Panc1 (cell line): ENCODE measurements at regions of chr16 and their contacts with region 1.

Region 1: GRCh38 chr16:30458561-30459394 is 13.1 kb upstream of the SEPHS2 start:
- DNase-seq: no peak
- ATAC-seq: peak; percentile 62; the same call in 1 of the 2 replicates
- H3K4me3 ChIP-seq: no peak overlapping the region
- H3K27ac ChIP-seq: no peak overlapping the region
- H3K4me1 ChIP-seq: no peaks in the 10 kb centered on the region
- H3K27me3 ChIP-seq: no peaks in the 10 kb centered on the region
- CTCF ChIP-seq: no peak

Region 2: GRCh38 chr16:30417529-30418349 is 41.0 kb before region 1 on chr16:
- CTCF ChIA-PET with region 1: no interaction called
- POLR2A ChIA-PET with region 1: no interaction called
- in situ Hi-C with region 1: no loop called
- intact Hi-C with region 1: no loop called
- DNase-seq: peak; percentile 81
- ATAC-seq: peak; percentile 94
- H3K4me3 ChIP-seq: peak overlapping the region; percentile 45 to 55
- H3K27ac ChIP-seq: peak overlapping the region; percentile 77
- H3K4me1 ChIP-seq: peaks cover 13% of the 10 kb centered on the region
- H3K27me3 ChIP-seq: no peaks in the 10 kb centered on the region
- CTCF ChIP-seq: no peak

Region 3: DNA sequence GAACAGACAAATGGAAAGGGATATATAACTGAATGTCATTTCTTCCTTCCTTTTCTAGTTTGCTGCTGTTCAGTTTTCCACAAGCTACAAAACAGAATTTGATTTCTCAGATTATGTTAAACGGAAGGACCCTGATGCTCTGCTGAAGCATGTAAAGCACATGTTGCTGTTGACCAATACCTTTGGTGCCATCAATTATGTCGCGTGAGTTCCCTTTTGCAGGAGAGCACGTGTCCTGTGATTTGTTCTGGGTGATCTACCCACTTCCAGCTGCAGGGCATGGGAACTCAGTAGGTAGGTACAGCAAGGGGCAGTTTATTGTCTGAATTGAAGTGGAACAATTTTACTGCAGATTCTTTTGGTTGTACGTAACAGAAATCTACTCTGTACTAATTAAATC is 22.6 kb after region 1 on chr16:
- CTCF ChIA-PET with region 1: no interaction called
- POLR2A ChIA-PET with region 1: interaction called, 17 read pairs
- in situ Hi-C with region 1: no loop called
- intact Hi-C with region 1: no loop called
- DNase-seq: no peak
- ATAC-seq: no peak
- H3K4me3 ChIP-seq: no peak overlapping the region
- H3K27ac ChIP-seq: no peak overlapping the region
- H3K4me1 ChIP-seq: no peaks in the 10 kb centered on the region
- H3K27me3 ChIP-seq: no peaks in the 10 kb centered on the region
- CTCF ChIP-seq: no peak

Region 4: GRCh38 chr16:30490210-30490609 is 31.4 kb after region 1 on chr16:
- CTCF ChIA-PET with region 1: no interaction called
- POLR2A ChIA-PET with region 1: interaction called, 13 read pairs
- in situ Hi-C with region 1: no loop called
- intact Hi-C with region 1: no loop called
- DNase-seq: no peak
- ATAC-seq: no peak
- H3K4me3 ChIP-seq: no peak overlapping the region
- H3K27ac ChIP-seq: no peak overlapping the region
- H3K4me1 ChIP-seq: 0 out of 2 replicates have a peak, but pooled peaks cover 3% of the 10 kb centered on the region
- H3K27me3 ChIP-seq: no peaks in the 10 kb centered on the region
- CTCF ChIP-seq: no peak

Region 5: DNA sequence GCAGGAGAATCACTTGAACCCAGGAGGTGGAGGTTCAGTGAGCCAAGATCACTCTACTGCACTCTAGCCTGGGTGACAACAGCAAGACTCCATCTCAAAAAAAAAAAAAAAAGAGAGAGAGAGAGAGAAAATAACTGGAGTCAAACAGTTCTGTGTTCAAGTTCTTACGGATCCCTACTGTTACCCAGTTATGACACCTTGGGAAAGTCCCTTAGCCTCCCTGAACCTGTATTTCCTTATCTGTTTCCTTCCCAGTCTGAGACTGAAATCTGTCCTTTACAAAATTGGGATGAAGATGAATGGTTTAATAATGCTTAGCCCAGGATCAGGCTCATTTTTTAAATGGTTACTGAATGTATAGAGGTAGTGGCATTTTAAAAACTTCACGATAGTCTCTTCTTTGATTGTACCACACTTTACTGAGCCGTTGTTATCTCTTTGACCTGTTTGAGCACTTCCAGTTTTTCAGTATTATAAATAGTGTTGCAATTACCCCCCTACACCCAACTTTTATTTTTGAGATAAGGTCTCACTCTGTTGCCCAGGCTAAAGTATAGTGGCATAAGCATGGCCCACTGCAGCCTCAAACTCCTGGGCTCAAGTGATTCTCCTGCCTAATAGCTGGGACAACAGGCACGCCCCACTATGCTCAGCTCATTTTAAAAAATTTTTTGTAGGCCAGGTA is 50.4 kb after region 1 on chr16:
- CTCF ChIA-PET with region 1: interaction called, 4 read pairs
- POLR2A ChIA-PET with region 1: interaction called, 12 read pairs
- in situ Hi-C with region 1: no loop called
- intact Hi-C with region 1: no loop called
- DNase-seq: no peak
- ATAC-seq: no peak
- H3K4me3 ChIP-seq: no peak overlapping the region
- H3K27ac ChIP-seq: no peak overlapping the region
- H3K4me1 ChIP-seq: no peaks in the 10 kb centered on the region
- H3K27me3 ChIP-seq: no peaks in the 10 kb centered on the region
- CTCF ChIP-seq: no peak

Region 6: GRCh38 chr16:30637942-30638341 is 179.2 kb after region 1 on chr16:
- CTCF ChIA-PET with region 1: no interaction called
- POLR2A ChIA-PET with region 1: no interaction called
- in situ Hi-C with region 1: no loop called
- intact Hi-C with region 1: no loop called
- DNase-seq: peak; percentile 60
- ATAC-seq: peak; percentile 64
- H3K4me3 ChIP-seq: no peak overlapping the region
- H3K27ac ChIP-seq: no peak overlapping the region
- H3K4me1 ChIP-seq: 0 out of 2 replicates have a peak, but pooled peaks cover 3% of the 10 kb centered on the region
- H3K27me3 ChIP-seq: no peaks in the 10 kb centered on the region
- CTCF ChIP-seq: peak; percentile 80